GM10248 (cell line): ENCODE measurements at regions of chr2 and their contacts with region 1.

Region 1: DNA sequence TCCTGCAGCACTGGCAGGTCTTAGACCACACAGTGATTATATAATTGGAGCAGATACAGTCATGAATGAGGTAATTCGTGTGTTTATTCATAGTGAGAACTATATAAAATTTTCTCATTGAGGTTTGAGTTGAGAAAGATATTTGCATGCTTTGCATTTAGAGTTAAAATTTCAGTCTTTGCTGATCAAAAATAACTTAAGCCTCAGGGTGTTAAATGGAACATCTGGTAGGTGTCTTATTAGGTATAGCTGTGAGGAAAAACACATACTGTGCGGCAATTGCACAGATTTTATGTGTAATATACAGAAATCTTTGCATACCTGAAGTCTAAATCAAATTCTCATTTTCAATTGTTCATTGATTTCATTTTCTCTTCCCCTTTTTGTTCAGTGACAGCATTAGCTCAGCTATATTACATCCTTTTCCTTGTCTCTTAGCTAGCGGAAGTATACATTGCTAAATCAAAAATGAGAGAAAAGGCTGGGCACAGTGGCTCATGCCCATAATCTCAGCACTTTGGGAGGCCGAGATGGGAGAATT is 21.2 kb downstream of the GORASP2 start:
- DNase-seq: peak; percentile 46
- CTCF ChIP-seq: no peak

Region 2: GRCh38 chr2:170928824-170929685 is 21.2 kb before region 1 on chr2 and contains the start of gene GORASP2:
- CTCF ChIA-PET with region 1: interaction called, 18 read pairs
- POLR2A ChIA-PET with region 1: interaction called, 3 read pairs
- DNase-seq: peak; percentile 98
- CTCF ChIP-seq: peak; percentile 83

Region 3: DNA sequence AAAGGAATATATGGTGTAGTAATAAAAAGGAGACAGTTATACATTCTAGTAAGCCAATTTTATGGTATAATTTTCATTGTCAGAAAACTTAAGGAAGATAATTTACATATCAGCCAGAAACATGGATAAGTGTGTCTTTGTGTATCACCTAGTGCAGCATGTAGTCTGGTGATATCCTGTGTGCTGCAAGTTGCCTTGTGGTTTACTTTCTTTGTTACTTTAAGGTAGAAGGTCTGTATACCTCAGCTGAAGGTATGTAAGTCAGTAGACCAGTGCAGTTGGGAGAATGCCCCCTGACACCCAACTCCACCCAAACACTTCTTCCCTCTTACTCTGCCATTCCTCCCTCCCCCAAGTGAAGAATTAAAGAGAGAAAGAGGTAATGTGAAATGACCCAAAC is 10.2 kb before region 1 on chr2:
- CTCF ChIA-PET with region 1: interaction called, 12 read pairs
- POLR2A ChIA-PET with region 1: no interaction called
- DNase-seq: no peak
- CTCF ChIP-seq: no peak

Region 4: DNA sequence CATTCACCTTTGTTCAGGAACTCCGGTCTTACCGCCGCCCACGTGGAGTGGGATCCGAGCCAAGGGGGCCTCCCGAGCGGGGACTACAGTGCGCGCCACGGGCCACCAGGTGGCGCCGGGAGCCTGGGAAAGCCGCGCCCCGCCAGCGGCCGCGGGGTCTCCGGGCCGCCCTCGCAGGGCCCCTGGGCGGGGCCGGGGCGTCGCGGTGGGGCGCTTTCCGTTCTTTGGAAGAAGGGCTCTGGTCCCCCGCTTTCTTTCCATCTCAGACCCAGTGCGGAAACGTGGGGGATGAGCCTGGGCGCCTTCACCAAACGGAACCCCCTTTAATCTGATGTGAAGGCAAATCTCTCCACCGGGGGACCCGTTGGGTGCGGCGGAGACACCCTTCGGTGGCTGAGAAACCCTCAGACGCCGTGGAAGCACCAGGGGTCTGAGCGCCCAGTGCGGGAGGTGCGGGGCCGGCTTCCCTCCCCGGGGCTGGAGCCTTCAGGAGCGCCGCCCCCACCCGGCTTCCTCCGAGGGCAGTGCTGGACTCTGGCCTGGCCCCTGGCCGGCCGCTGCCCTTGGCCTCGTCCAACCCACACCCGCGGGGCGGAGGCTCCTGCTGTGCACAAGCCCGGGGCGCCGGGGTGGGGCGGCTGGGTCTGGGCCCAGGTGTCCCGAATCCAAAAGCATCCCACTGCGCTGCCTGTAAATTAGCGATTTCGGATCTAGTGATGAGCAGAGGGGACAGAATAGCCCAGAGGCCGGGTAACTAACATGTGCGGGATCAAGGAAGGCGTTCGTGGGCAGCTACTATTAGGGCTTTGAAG is 23.4 kb after region 1 on chr2:
- CTCF ChIA-PET with region 1: interaction called, 43 read pairs
- POLR2A ChIA-PET with region 1: no interaction called
- DNase-seq: peak; percentile 96
- CTCF ChIP-seq: peak; percentile 94